Naive thymus-derived CD4-positive, alpha-beta T cell (primary cell): ENCODE measurements at regions of chr4 and their contacts with region 1.

Region 1: GRCh38 chr4:123037804-123038203 is 115.4 kb upstream of the NUDT6 start:
- DNase-seq: no peak
- ATAC-seq: no peak
- H3K4me3 ChIP-seq: no peak overlapping the region
- H3K4me3 Mint-ChIP-seq: no peak overlapping the region
- H3K27ac ChIP-seq: no peak overlapping the region
- H3K27ac Mint-ChIP-seq: no peak overlapping the region
- H3K4me1 ChIP-seq: no peaks in the 10 kb centered on the region
- H3K4me1 Mint-ChIP-seq: peaks cover 0 to 5% (median 0%) of the 10 kb centered on the region in 7 donors
- H3K27me3 ChIP-seq: no peaks in the 10 kb centered on the region
- H3K27me3 Mint-ChIP-seq: no peaks in the 10 kb centered on the region

Region 2: DNA sequence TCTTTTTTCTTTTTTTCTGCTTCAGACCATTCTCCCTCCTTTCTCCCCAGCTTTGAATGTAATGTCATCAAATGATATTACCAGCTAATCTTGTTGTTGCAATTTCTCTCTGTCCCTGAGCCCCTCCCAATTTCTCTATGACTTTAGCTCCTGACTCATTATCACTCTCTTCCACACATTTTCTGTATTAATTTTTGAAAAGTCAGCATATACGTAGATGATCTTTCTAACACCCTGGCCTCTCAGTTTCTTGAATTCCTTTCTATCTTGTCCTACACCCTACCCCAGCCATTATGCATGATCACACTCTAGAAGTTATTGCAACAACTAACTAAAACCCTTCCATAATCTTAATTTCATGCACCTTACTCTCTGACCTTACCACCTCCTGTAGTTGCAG is 1072.8 kb before region 1 on chr4:
- CTCF ChIA-PET with region 1: no interaction called
- POLR2A ChIA-PET with region 1: no interaction called
- intact Hi-C with region 1: no loop called
- DNase-seq: no peak
- ATAC-seq: no peak
- H3K4me3 ChIP-seq: no peak overlapping the region
- H3K4me3 Mint-ChIP-seq: no peak overlapping the region
- H3K27ac ChIP-seq: no peak overlapping the region
- H3K27ac Mint-ChIP-seq: no peak overlapping the region
- H3K4me1 ChIP-seq: no peaks in the 10 kb centered on the region
- H3K4me1 Mint-ChIP-seq: no peaks in the 10 kb centered on the region
- H3K27me3 ChIP-seq: no peaks in the 10 kb centered on the region
- H3K27me3 Mint-ChIP-seq: peaks cover 4 to 34% (median 19%) of the 10 kb centered on the region in 5 donors

Region 3: GRCh38 chr4:122865425-122865824 is 172.4 kb before region 1 on chr4:
- CTCF ChIA-PET with region 1: no interaction called
- POLR2A ChIA-PET with region 1: no interaction called
- intact Hi-C with region 1: no loop called
- DNase-seq: no peak
- ATAC-seq: no peak
- H3K4me3 ChIP-seq: no peak overlapping the region
- H3K4me3 Mint-ChIP-seq: no peak overlapping the region
- H3K27ac ChIP-seq: no peak overlapping the region
- H3K27ac Mint-ChIP-seq: no peak overlapping the region
- H3K4me1 ChIP-seq: no peaks in the 10 kb centered on the region
- H3K4me1 Mint-ChIP-seq: peaks cover 0 to 4% (median 0%) of the 10 kb centered on the region in 7 donors
- H3K27me3 ChIP-seq: no peaks in the 10 kb centered on the region
- H3K27me3 Mint-ChIP-seq: peaks cover 20 to 42% (median 32%) of the 10 kb centered on the region in 5 donors

Region 4: DNA sequence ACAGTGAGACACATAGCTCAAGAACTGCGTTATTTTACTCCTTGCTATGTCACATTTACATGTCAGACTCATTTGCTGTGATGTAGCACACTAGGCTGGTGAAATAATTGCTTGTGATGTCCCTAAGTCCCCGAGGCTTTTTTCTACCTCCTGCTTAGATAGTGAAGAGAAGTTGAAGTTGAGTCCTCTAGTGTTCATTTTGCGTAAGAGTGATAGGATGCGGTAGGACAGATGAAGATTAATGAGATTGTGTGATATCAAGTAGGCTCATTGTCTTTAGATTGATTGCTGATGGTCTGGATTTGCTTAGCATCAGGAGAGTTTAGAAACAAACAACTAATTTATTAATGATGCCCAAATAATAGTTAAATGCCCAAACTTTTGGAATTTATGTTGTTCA is 58.2 kb after region 1 on chr4:
- CTCF ChIA-PET with region 1: no interaction called
- POLR2A ChIA-PET with region 1: no interaction called
- intact Hi-C with region 1: loop called in 1 of 2 experiments (anchors 2 kb)
- DNase-seq: no peak
- ATAC-seq: no peak
- H3K4me3 ChIP-seq: no peak overlapping the region
- H3K4me3 Mint-ChIP-seq: no peak overlapping the region
- H3K27ac ChIP-seq: no peak overlapping the region
- H3K27ac Mint-ChIP-seq: no peak overlapping the region
- H3K4me1 ChIP-seq: no peaks in the 10 kb centered on the region
- H3K4me1 Mint-ChIP-seq: no peaks in the 10 kb centered on the region
- H3K27me3 ChIP-seq: no peaks in the 10 kb centered on the region
- H3K27me3 Mint-ChIP-seq: no peaks in the 10 kb centered on the region

Region 5: GRCh38 chr4:123182289-123182688 is 144.5 kb after region 1 on chr4:
- CTCF ChIA-PET with region 1: no interaction called
- POLR2A ChIA-PET with region 1: no interaction called
- intact Hi-C with region 1: no loop called
- DNase-seq: no peak
- ATAC-seq: no peak
- H3K4me3 ChIP-seq: no peak overlapping the region
- H3K4me3 Mint-ChIP-seq: no peak overlapping the region
- H3K27ac ChIP-seq: no peak overlapping the region
- H3K27ac Mint-ChIP-seq: no peak overlapping the region
- H3K4me1 ChIP-seq: no peaks in the 10 kb centered on the region
- H3K4me1 Mint-ChIP-seq: peaks cover 0 to 2% (median 0%) of the 10 kb centered on the region in 7 donors
- H3K27me3 ChIP-seq: no peaks in the 10 kb centered on the region
- H3K27me3 Mint-ChIP-seq: no peaks in the 10 kb centered on the region